Dorsolateral prefrontal cortex (tissue), 120 donors: ENCODE measurements at regions of chr4 and their contacts with region 1.

Region 1: GRCh38 chr4:169024762-169025161 is 14.7 kb upstream of the CBR4 start:
- DNase-seq: no peak
- H3K4me3 ChIP-seq: no peak overlapping the region
- H3K27ac ChIP-seq: no peak overlapping the region
- H3K27me3 ChIP-seq: no peaks in the 10 kb centered on the region
- CTCF ChIP-seq: peak in 55 of 56 donors; percentile 43 to 85 (median 65)

Region 2: DNA sequence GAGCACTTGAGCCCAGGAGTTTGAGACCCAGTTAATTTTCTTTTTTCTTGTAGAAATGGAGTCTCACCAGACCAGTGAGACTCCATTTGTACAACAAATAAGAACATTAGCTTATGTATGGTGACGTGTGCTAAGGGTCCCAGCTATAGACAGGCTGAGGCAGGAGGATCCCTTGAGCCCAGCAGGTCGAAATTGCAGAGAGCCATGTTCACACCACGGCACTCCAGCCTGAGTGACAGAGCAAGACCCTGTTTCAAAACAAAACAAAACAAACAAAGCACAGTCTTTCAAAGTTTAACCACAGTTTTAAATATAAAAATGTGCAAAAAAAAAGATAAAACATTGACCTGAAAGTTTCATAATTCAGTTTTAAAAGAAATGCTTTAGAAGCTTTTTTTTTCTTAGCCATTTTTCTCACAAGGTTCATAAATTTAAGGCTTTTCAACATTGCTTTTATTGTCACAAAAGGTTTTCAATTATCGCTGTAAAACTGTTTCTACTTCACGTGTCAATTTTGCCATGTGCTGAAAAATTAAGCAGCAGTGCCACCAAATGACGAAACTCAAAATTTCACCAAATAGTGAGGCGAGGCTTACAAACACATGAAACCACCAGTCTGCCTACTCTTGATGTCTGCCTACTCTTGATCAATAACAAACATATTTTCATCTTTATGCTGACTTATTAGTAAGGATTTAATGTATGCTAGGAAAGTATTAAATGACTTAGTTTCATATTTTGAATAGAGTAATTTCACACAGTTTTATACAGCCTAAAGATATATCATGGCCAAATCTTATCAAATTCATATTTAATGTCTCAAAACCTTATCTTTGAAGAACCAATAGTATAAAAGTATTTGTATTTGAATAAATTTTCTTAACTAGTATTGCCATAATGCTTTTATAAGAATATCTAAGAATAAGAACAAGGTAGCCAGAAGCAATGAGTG is 461.3 kb after region 1 on chr4:
- intact Hi-C with region 1: loop called (anchors 2 to 5 kb)
- DNase-seq: peak in 3 of 10 donors; percentile 4 to 48 (median 43)
- H3K4me3 ChIP-seq: peak overlapping the region in 13 of 59 donors; percentile 11 to 51 (median 27)
- H3K27ac ChIP-seq: peak overlapping the region in 9 of 59 donors; percentile 0 to 58 (median 14)
- H3K27me3 ChIP-seq: no peaks in the 10 kb centered on the region
- CTCF ChIP-seq: peak in 55 of 56 donors; percentile 13 to 89 (median 71)

Region 3: GRCh38 chr4:169619959-169620879 is 595.5 kb after region 1 on chr4 and contains the start of gene CLCN3:
- intact Hi-C with region 1: no loop called
- DNase-seq: peak; percentile 90 to 99 (median 98)
- H3K4me3 ChIP-seq: peak within 1 kb of the TSS; percentile 61 to 95 (median 85)
- H3K27ac ChIP-seq: peak within 1 kb of the TSS; percentile 75 to 99 (median 96)
- H3K27me3 ChIP-seq: no peaks in the 10 kb centered on the region
- CTCF ChIP-seq: peak in 41 of 56 donors; percentile 8 to 62 (median 41)
- total RNA-seq, gene CLCN3: 60.7 to 119 (median 90.2) TPM